ENCODE measurements at regions of chr7 and their contacts with region 1.

Region 1: DNA sequence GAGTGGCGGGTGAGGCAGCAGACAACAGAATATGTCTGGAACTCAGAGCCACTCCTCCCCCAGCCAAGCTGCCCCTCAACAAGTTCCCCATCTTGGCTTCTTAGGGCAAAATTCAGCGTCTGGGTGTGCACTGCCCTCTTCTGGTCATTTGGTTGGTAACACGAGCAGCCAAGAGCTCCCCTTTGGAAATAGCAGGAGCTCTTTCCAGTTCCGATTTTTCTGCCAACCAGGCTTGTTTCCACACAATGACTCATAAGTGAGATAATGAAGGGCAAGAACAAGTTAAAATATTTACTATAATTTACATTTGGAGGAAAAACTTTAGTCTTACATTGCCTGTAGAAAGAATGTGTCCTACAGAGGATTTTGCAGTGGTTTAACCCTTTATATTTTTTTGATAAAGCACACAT is 70.5 kb downstream of the ADCYAP1R1 start:
- DNase-seq: peak; percentile 83
- H3K4me3 Mint-ChIP-seq: no peak overlapping the region
- H3K27ac Mint-ChIP-seq: no peak overlapping the region
- H3K4me1 Mint-ChIP-seq: peaks cover 6% of the 10 kb centered on the region
- H3K27me3 Mint-ChIP-seq: peaks cover 34% of the 10 kb centered on the region
- CTCF ChIP-seq: peak; percentile 85

Region 2: GRCh38 chr7:30810986-30811385 is 311.7 kb before region 1 on chr7:
- CTCF ChIA-PET with region 1: interaction called, 33 read pairs
- POLR2A ChIA-PET with region 1: no interaction called
- intact Hi-C with region 1: no loop called
- DNase-seq: no peak
- H3K4me3 Mint-ChIP-seq: no peak overlapping the region
- H3K27ac Mint-ChIP-seq: no peak overlapping the region
- H3K4me1 Mint-ChIP-seq: peaks cover 5% of the 10 kb centered on the region
- H3K27me3 Mint-ChIP-seq: no peaks in the 10 kb centered on the region
- CTCF ChIP-seq: no peak

Region 3: DNA sequence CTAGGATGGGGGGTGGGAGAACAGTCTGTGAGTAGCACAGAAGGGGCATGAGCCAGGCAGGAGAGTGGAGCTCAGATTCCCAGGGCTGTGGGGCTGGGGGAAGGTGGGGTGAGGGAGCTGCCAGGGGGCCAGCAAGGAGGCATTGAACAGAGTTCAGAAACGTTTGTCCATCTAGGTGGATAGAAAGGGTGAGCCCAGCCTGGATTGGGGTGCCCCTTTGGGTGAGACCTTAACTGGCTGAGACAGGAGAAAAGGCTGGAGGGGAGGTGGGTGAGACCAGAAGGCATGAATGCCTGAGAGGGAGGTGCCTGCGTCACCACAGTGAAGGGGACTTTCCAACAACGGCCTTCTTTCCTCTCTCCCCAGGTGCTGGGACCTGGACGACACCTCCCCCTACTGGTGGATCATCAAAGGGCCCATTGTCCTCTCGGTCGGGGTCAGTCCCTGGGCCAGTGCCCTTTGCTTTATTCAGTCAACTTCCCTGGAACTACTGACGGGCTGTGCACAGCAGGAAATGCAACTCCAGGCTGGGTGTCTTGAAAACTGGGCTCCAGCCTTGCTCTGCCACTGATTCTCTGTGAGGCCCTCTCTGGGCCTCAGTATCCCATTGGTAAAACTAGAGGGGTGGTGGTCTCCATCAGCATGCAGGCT is 147.9 kb before region 1 on chr7:
- CTCF ChIA-PET with region 1: interaction called, 743 read pairs
- POLR2A ChIA-PET with region 1: no interaction called
- intact Hi-C with region 1: no loop called
- DNase-seq: peak; percentile 77
- H3K4me3 Mint-ChIP-seq: no peak overlapping the region
- H3K27ac Mint-ChIP-seq: no peak overlapping the region
- H3K4me1 Mint-ChIP-seq: no peaks in the 10 kb centered on the region
- H3K27me3 Mint-ChIP-seq: peaks cover 60% of the 10 kb centered on the region
- CTCF ChIP-seq: peak; percentile 71

Region 4: GRCh38 chr7:31100445-31100844 is 22.2 kb before region 1 on chr7:
- CTCF ChIA-PET with region 1: interaction called, 19 read pairs
- POLR2A ChIA-PET with region 1: no interaction called
- intact Hi-C with region 1: no loop called
- DNase-seq: no peak
- H3K4me3 Mint-ChIP-seq: no peak overlapping the region
- H3K27ac Mint-ChIP-seq: no peak overlapping the region
- H3K4me1 Mint-ChIP-seq: no peaks in the 10 kb centered on the region
- H3K27me3 Mint-ChIP-seq: peaks cover 76% of the 10 kb centered on the region
- CTCF ChIP-seq: no peak

Region 5: GRCh38 chr7:31835471-31835870 is 712.8 kb after region 1 on chr7:
- CTCF ChIA-PET with region 1: no interaction called
- POLR2A ChIA-PET with region 1: no interaction called
- intact Hi-C with region 1: no loop called
- DNase-seq: no peak
- H3K4me3 Mint-ChIP-seq: no peak overlapping the region
- H3K27ac Mint-ChIP-seq: no peak overlapping the region
- H3K4me1 Mint-ChIP-seq: no peaks in the 10 kb centered on the region
- H3K27me3 Mint-ChIP-seq: no peaks in the 10 kb centered on the region
- CTCF ChIP-seq: no peak

Measured in MCF 10A (cell line).